PC-9 (cell line): ENCODE measurements at regions of chr2 and their contacts with region 1.

Region 1: GRCh38 chr2:54212456-54212855 is 43.6 kb downstream of the TSPYL6 start:
- DNase-seq: peak; percentile 14 to 84
- H3K4me3 ChIP-seq: no peak overlapping the region
- H3K27ac ChIP-seq: no peak overlapping the region
- H3K4me1 ChIP-seq: 0 out of 2 replicates have a peak, but pooled peaks cover 6% of the 10 kb centered on the region
- H3K27me3 ChIP-seq: no peaks in the 10 kb centered on the region
- CTCF ChIP-seq: no peak

Region 2: DNA sequence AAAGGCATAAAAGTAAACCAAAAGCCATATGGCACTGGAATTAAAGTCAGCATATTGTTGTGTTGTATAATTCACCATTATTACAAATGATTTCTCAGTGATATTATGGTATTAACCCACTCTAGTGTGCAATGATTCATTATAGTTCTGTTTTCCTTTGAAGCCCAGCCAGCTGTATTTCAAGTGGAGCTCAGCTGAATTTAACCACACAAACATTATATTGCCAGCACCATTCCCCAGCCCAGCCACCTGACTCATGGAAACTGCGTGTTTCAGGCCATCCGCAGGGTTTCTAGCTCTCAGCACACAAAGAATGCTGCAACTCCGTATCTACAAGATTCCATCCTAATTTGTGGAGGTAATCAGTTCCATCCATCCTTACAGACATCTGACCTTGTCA is 611.6 kb before region 1 on chr2:
- CTCF ChIA-PET with region 1: no interaction called
- POLR2A ChIA-PET with region 1: no interaction called
- intact Hi-C with region 1: no loop called
- DNase-seq: no peak
- H3K4me3 ChIP-seq: no peak overlapping the region
- H3K27ac ChIP-seq: no peak overlapping the region
- H3K4me1 ChIP-seq: no peaks in the 10 kb centered on the region
- H3K27me3 ChIP-seq: no peaks in the 10 kb centered on the region
- CTCF ChIP-seq: no peak

Region 3: GRCh38 chr2:54330162-54330925 is 117.9 kb after region 1 on chr2:
- CTCF ChIA-PET with region 1: no interaction called
- POLR2A ChIA-PET with region 1: no interaction called
- intact Hi-C with region 1: loop called (anchors 10 kb)
- DNase-seq: peak; percentile 93 to 98
- H3K4me3 ChIP-seq: peak overlapping the region; percentile 74
- H3K27ac ChIP-seq: 0 out of 2 replicates have a peak overlapping the region, but pooled peaks have one; percentile 6
- H3K4me1 ChIP-seq: peaks cover 15% of the 10 kb centered on the region
- H3K27me3 ChIP-seq: no peaks in the 10 kb centered on the region
- CTCF ChIP-seq: no peak